BJ (cell line): ENCODE measurements at regions of chr4 and their contacts with region 1.

Region 1: DNA sequence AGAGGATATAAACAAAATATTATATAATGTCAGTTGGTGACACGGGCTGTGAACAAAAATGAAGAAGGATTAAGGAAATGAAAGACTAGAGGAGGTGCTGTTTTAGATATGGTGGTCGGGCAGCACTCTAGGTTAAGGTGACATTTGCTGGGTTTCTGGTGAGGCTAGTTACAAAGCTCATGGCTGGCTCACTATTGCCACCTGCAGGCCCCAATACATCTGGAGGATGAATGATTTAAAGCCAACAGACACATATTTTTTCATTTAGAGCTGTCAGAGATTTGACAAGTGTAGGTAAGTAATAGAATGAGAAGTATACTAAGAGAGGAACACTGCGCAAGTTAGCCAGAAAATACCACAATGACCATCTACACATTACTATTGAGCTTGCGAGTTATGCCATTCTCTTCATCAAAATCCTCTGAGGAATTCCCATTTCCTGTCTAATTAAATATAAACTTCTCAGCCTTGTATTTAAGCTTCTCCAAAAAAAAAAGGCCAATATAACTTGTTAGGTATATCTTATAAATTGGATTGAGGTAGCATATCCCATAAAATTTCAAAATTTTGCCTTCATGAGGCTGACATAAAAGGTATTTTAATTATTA is 6.4 kb upstream of the FGG start:
- DNase-seq: no peak
- H3K4me3 ChIP-seq: no peak overlapping the region
- H3K27me3 ChIP-seq: peaks cover 4% of the 10 kb centered on the region
- CTCF ChIP-seq: peak; percentile 73

Region 2: DNA sequence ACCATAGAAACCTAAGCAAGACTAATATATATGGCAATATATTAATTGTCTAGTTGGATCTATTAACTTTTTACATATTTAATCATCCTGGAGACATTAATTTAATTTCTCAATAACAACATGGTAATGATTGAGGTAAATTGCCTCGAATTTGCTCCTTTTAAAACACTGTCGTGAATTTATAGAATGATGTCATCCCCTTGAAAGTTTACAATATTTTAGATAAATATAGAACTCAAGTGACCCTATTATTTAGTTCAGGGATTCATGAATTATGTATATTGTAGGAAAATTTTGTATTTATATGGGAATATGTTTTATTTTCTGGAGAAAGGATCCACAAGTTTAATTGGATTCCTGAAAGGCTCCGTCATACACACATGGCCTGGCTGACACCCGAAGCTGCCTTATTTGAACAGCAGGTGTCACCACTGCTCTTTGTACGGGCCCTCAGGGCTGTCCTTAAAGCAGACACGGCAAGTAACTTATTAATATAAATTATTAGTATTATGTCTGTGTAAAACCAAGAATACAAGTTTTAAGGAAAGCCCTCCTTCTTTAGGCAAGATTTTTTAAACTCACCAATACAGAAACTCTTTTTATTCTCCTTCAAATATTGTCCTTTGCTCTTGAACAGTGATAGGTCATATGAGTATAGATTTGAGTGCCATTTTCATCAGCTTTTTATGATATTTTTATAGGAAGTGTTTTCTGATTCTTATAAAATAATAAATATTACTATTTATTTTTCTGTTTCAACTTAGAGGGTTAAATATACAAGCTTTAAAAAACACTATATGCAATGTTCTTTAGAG is 66.7 kb before region 1 on chr4:
- CTCF ChIA-PET with region 1: interaction called, 46 read pairs
- POLR2A ChIA-PET with region 1: no interaction called
- DNase-seq: peak; percentile 37
- H3K4me3 ChIP-seq: no peak overlapping the region
- H3K27me3 ChIP-seq: no peaks in the 10 kb centered on the region
- CTCF ChIP-seq: peak; percentile 81

Region 3: GRCh38 chr4:154559494-154560418 is 59.1 kb before region 1 on chr4:
- CTCF ChIA-PET with region 1: interaction called, 46 read pairs
- POLR2A ChIA-PET with region 1: no interaction called
- DNase-seq: no peak
- H3K4me3 ChIP-seq: no peak overlapping the region
- H3K27me3 ChIP-seq: no peaks in the 10 kb centered on the region
- CTCF ChIP-seq: peak; percentile 51

Region 4: DNA sequence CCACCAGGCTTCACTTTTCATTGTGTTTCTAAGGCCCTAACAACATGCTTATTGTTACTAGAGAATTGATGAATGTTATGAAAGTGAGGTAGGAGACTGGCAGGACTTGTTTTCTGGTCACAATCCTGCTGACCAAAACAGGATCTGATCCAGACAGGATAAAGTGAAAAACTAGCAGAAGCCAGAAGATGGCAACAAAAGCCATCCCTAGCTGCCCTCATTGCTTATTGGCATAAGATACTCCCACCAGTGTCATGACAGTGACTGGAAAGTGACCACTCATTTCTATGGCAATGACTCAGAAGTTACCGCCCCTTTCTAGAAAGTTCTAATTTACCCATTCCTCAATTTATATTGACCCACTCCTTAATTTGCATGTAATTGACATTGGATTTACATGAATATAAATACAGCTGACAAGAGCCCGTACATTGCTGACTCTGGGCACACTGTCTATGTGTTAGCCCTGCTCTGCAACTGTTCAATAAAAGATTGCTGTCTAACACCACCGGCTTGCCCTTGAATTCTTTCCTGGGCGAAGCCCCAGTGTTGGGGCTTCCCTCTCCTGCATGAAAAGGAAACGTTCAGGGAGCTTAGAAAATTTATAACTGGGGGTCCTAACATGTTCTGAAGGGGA is 23.7 kb after region 1 on chr4:
- CTCF ChIA-PET with region 1: interaction called, 11 read pairs
- POLR2A ChIA-PET with region 1: no interaction called
- DNase-seq: no peak
- H3K4me3 ChIP-seq: no peak overlapping the region
- H3K27me3 ChIP-seq: no peaks in the 10 kb centered on the region
- CTCF ChIP-seq: no peak

Region 5: DNA sequence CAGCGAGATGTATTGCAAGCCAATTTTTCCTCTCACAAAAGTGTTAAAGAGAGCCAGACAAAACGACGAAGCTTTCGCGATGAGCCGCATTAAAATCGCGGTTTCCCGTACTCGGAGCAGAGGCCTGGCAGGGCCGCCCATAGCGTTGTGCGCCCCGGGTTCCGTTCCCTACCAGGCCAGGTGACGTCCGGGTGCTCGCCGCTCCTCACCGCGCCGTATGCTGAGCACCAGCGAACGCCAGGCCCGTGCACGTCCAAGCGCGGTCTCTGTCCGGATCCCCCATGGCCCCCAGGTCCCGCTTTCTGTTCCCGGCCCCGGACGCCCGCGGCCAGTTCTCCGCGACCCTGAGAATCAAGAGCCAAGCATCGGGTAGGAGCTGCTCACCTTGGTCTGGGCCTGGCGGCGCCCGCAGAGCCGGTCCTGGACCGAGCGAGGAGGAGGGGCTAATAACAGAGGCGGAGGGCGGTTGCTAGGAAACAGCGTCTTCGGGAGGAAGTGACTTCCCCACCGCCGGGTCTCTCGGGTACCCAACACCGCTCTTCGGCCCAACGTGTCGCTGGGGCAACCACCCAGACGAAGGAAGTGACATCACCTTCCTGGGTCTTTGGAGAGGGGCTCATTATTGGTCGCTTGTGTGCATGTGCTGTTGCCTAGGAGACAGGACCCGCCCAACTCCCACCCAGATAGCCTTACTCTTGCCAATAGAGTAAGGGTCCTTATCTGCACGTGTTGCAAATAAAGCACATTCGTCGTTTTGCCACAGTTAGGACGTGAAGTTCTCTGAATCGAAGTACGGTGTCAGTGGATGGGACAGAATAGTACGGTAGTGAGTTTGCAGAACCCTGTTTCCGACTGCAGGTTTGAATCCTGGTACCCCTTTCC is 757.8 kb after region 1 on chr4 and contains the start of gene MAP9:
- CTCF ChIA-PET with region 1: no interaction called
- POLR2A ChIA-PET with region 1: no interaction called
- DNase-seq: peak; percentile 66
- H3K4me3 ChIP-seq: peak within 1 kb of the TSS; percentile 72
- H3K27me3 ChIP-seq: no peaks in the 10 kb centered on the region; the same call in 1 of the 2 replicates
- CTCF ChIP-seq: no peak
- polyA plus RNA-seq, gene MAP9: 3.3 and 7.4 TPM in 2 replicates